Activated CD4-positive, alpha-beta T cell treated with anti-CD3 and anti-CD28 coated beads for 36 hours (primary cell): ENCODE measurements at regions of chr20 and their contacts with region 1.

Region 1: DNA sequence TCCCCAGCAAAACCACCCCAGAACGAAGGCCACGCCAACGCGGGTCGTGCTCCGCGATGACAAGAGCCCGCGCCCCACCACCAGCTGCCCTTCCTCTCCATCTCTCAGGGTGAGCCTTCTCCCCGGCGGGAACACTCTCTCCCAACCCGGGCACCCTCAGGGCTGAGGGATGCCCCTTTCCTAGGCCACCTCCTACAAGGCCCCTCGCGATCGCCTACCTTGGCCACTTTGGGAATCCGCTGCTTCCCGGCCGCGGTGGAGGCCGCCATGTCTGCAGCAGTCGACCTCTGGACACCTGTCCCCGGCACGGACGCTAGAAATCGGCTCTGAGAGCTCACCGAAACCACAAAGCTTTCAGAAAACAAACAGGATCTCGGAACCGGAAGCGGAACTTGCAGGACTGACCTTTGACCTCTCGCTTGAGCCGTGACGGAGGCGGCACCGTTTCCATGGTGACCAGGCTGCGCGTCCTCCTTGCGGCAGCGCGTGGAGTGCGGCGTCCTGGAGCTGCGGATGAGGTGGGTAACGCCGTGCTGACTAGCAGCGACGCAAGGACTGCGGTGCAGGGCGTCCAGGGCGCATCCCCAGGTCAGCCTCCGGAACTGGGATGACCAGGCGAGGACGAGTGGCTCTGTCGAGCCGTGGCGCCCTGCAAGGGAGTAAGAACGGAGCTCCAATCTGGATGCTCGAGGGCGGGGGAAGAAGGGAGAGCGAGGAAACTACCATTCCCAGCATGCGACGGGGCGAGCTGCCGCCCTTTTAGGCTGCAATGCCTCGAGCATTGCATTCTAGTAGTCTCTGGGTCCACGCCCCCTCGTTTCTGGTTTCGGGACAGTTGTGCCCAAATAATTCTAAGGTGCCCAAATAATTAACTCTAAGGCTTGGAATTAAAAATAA is at the starts of genes CFAP61 and CRNKL1:
- DNase-seq: peak; percentile 98
- ATAC-seq: peak; percentile 95
- H3K4me3 Mint-ChIP-seq: peak within 1 kb of the TSS; percentile 99
- H3K27ac Mint-ChIP-seq: peak within 1 kb of the TSS; percentile 98
- H3K4me1 Mint-ChIP-seq: peaks cover 14% of the 10 kb centered on the region
- H3K27me3 Mint-ChIP-seq: no peaks in the 10 kb centered on the region
- total RNA-seq, gene CFAP61: 0.39 to 0.51 TPM
- total RNA-seq, gene CRNKL1: 19.9 to 22.2 TPM

Region 2: GRCh38 chr20:18507218-18508021 is 1544.9 kb before region 1 on chr20 and contains the start of gene SEC23B:
- CTCF ChIA-PET with region 1: no interaction called
- POLR2A ChIA-PET with region 1: no interaction called
- intact Hi-C with region 1: loop called in 1 of 2 experiments (anchors 1 kb)
- DNase-seq: peak; percentile 99
- ATAC-seq: peak; percentile 94
- H3K4me3 Mint-ChIP-seq: peak within 1 kb of the TSS; percentile 99
- H3K27ac Mint-ChIP-seq: peak within 1 kb of the TSS; percentile 100
- H3K4me1 Mint-ChIP-seq: peaks cover 48% of the 10 kb centered on the region
- H3K27me3 Mint-ChIP-seq: no peaks in the 10 kb centered on the region
- total RNA-seq, gene SEC23B: 95.3 to 119 TPM

Region 3: GRCh38 chr20:18793625-18794427 is 1258.5 kb before region 1 on chr20:
- CTCF ChIA-PET with region 1: no interaction called
- POLR2A ChIA-PET with region 1: no interaction called
- intact Hi-C with region 1: loop called in 1 of 2 experiments (anchors 5 kb)
- DNase-seq: peak; percentile 92
- ATAC-seq: peak; percentile 98
- H3K4me3 Mint-ChIP-seq: peak overlapping the region; percentile 87
- H3K27ac Mint-ChIP-seq: peak overlapping the region; percentile 96
- H3K4me1 Mint-ChIP-seq: peaks cover 17% of the 10 kb centered on the region
- H3K27me3 Mint-ChIP-seq: peaks cover 7% of the 10 kb centered on the region

Region 4: DNA sequence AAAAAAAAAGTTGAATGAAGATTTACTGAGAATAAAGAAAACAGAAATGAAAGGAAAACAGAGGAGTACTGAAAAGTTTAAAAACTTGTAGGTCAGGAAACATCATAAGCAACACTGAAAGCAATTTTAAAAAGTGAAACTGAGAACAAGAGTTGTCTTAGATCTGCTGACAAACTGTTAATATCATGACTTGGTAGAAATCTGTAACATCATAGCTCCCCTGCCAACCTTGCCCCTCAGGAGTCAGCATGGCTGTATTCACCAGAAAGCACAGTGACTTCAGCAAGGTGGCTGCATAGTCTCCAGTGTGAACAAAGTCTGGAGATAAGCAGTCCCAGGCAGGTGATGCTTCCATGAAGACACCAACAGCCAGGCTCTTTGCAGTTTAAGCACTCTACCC is 29.8 kb before region 1 on chr20:
- CTCF ChIA-PET with region 1: interaction called, 21 read pairs
- POLR2A ChIA-PET with region 1: interaction called, 6 read pairs
- intact Hi-C with region 1: loop called (anchors 1 kb)
- DNase-seq: peak; percentile 21
- ATAC-seq: peak; percentile 68
- H3K4me3 Mint-ChIP-seq: no peak overlapping the region
- H3K27ac Mint-ChIP-seq: peak overlapping the region; percentile 49
- H3K4me1 Mint-ChIP-seq: peaks cover 61% of the 10 kb centered on the region
- H3K27me3 Mint-ChIP-seq: no peaks in the 10 kb centered on the region

Region 5: DNA sequence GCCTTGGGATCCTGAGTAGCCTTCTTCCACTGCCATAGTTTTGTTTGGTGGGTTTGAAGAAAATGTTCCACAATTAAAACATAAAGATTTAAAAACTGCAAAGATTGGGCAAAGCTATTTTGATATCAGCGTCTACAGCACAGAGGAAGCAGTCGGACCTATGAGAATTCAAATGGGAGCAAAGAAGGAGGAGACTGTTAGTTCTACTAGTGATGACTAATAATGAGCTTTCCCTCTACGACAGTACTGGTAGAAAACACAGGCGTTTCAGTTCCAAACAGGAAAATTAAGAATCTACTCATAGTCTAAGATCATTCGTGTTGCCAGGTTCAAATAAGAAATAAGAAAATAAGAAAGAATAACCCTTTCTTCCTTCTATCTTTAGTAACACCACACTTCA is 436.7 kb after region 1 on chr20:
- CTCF ChIA-PET with region 1: no interaction called
- POLR2A ChIA-PET with region 1: interaction called, 4 read pairs
- intact Hi-C with region 1: loop called in 1 of 2 experiments (anchors 2 kb)
- DNase-seq: no peak
- ATAC-seq: peak; percentile 17
- H3K4me3 Mint-ChIP-seq: peak overlapping the region; percentile 67
- H3K27ac Mint-ChIP-seq: peak overlapping the region; percentile 84
- H3K4me1 Mint-ChIP-seq: peaks cover 64% of the 10 kb centered on the region
- H3K27me3 Mint-ChIP-seq: no peaks in the 10 kb centered on the region

Region 6: GRCh38 chr20:21125849-21126580 is 1073.7 kb after region 1 on chr20 and contains the start of gene KIZ:
- CTCF ChIA-PET with region 1: no interaction called
- POLR2A ChIA-PET with region 1: interaction called, 3 read pairs
- intact Hi-C with region 1: loop called in 1 of 2 experiments (anchors 5 kb)
- DNase-seq: peak; percentile 99
- ATAC-seq: peak; percentile 97
- H3K4me3 Mint-ChIP-seq: peak within 1 kb of the TSS; percentile 95
- H3K27ac Mint-ChIP-seq: peak within 1 kb of the TSS; percentile 86
- H3K4me1 Mint-ChIP-seq: peaks cover 18% of the 10 kb centered on the region
- H3K27me3 Mint-ChIP-seq: no peaks in the 10 kb centered on the region
- total RNA-seq, gene KIZ: 13.2 to 15.2 TPM